ENCODE measurements at regions of chr1 and their contacts with region 1.

Region 1: DNA sequence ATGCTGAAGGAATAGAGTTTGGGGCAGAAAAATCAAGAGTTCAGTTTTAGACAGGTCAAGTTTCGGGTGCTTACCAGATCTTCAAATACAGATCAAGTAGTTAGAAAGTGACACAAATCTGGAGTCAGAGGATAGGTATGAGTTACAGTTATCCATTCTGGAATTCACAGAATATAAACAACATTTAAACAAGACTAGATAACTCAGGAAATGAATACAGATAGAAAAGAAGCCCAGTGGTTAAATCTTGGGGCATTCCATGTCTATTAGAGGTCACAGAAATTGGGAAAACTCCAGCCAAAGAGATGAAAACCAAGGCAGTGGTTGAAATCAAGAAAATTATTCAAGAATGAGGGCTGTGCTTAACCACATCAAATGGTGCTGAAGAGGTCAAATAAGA is 187.0 kb upstream of the HP1BP3 start:
- DNase-seq: no peak
- H3K4me3 ChIP-seq: no peak overlapping the region
- H3K27ac ChIP-seq: no peak overlapping the region
- H3K4me1 ChIP-seq: no peaks in the 10 kb centered on the region
- H3K27me3 ChIP-seq: no peaks in the 10 kb centered on the region
- CTCF ChIP-seq: no peak
- EP300 ChIP-seq: no peak
- POLR2A ChIP-seq: no peak

Region 2: DNA sequence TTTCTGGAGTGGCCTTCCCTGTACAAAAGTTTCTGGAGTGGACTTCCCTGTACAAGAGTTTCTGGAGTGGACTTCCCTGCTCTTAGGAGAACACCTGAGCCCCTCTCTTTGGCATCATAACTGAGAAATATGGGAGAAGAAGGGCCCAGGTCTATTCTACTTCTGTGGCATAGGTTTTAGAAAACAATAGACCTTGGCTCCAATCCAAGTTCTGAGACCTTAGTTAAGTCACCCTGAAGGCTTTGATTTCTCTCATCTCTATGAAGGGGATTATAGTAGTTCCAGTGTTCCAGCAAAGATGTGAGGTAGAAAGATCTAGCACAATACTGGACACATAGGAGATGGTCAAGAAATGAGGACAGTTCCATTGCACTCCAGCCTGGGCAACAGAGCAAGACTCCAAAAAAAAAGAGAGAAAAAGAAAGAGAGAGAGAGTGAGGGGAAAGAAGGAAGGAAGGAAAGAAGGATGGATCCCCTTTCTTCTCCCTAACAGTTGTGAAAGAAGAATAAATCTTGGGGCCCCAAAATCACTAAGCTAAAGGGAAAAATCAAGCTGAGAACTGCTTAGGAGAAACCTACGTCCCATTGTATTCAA is 215.9 kb after region 1 on chr1:
- in situ Hi-C with region 1: loop called in 1 of 4 experiments (anchors 10 kb)
- intact Hi-C with region 1: no loop called
- DNase-seq: no peak
- H3K4me3 ChIP-seq: no peak overlapping the region
- H3K27ac ChIP-seq: peak overlapping the region; percentile 67 to 83 (median 82)
- H3K4me1 ChIP-seq: peaks cover 0 to 30% (median 19%) of the 10 kb centered on the region in 4 donors
- H3K27me3 ChIP-seq: no peaks in the 10 kb centered on the region
- CTCF ChIP-seq: no peak
- EP300 ChIP-seq: no peak
- POLR2A ChIP-seq: no peak

Region 3: GRCh38 chr1:21200767-21201166 is 226.7 kb after region 1 on chr1:
- in situ Hi-C with region 1: loop called in 1 of 4 experiments (anchors 10 kb)
- intact Hi-C with region 1: loop called (anchors 2 kb)
- DNase-seq: no peak
- H3K4me3 ChIP-seq: no peak overlapping the region
- H3K27ac ChIP-seq: no peak overlapping the region
- H3K4me1 ChIP-seq: no peaks in the 10 kb centered on the region
- H3K27me3 ChIP-seq: no peaks in the 10 kb centered on the region
- CTCF ChIP-seq: no peak
- EP300 ChIP-seq: no peak
- POLR2A ChIP-seq: no peak

Region 4: DNA sequence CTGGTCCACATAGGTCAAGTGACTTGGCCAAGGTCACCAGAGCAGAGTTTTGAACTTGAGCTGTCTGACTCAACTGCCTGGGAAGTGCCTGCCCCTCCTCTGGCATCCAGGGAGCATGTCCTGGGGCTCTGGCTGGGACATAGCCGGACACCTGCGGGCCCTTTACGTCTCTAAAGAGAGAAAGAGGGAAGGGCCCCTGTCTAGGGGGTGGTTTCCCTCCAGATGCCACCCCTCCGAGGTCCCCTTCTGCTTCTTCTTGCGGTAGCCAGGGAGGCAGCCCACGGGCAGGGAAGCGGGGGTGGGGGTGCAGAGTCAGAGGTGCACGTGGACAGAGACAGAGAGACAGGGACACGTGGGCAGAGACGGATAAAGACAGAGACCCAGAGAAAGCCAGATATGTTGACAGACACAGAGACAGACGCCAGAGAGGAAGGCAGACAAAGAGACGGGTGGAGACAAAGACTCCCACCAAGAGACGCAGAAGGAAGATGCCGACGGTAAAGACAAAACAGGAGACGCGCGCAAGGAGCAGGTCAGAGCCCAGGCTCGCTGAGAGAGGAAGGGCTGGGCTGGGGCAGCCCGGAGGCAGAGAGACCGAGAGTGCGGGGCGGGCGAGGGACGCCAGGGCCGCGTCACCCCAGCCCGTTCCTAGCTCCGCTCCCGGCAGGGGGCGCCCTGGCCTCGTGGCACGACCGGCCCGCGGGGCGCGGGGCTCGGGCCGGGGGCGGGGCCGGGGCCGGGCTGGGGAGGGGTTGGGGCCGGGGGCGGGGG is 534.7 kb after region 1 on chr1:
- in situ Hi-C with region 1: no loop called
- intact Hi-C with region 1: no loop called
- DNase-seq: peak; percentile 62
- H3K4me3 ChIP-seq: peak overlapping the region in 1 of 4 donors; percentile 38
- H3K27ac ChIP-seq: no peak overlapping the region
- H3K4me1 ChIP-seq: peaks cover 0 to 18% (median 8%) of the 10 kb centered on the region in 4 donors
- H3K27me3 ChIP-seq: peaks cover 55% of the 10 kb centered on the region
- CTCF ChIP-seq: peak; percentile 28 to 51 (median 47)
- EP300 ChIP-seq: no peak
- POLR2A ChIP-seq: no peak